ENCODE measurements at regions of chr2 and their contacts with region 1.

Region 1: DNA sequence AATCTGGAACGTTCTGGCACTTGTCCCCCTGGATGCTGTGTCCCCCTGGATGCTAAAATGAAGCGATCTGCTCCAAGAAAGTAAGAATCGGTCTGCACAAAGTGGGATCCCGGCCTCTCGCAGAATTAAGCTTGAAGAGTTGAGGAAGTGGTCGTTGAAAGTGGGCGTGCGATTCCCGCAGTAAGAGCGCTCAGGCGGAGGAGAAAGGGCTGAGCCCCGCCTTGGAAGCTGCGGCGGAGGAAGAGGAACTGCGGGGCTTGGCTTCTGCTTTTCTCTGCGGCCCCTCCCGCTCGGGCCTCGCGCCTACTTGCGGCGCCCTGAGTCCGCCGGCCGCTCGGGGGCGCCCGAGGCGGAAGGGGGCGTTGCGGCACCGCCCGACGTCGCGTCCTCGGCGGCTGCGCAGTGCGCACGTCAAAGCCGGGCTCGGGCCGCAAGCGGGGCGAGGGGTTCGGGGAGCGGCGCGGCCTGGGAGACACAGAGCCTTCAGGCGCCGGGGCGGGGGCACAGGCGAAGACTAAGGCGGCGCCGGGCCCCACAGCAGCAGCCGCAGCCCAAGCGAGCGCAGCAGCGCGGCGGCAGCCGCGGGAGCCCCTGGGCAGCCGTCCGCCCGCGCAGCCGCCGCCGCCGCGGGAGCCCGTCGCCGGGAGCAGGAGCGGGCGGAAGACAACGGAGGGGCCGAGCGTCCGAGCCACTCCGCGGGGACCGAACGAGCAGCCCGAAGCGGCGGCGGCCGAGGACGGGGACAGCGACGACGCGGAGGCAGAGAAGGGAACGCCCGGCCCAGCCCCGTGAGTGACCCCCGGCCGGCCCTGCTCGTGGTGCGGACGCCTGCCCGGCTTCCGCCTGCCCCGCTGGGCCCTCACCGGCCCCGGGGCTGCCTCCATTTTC is at the start of gene CAB39:
- DNase-seq: peak; percentile 84
- H3K4me3 ChIP-seq: peak within 1 kb of the TSS; percentile 70 to 86 (median 84)
- H3K27ac ChIP-seq: peak within 1 kb of the TSS; percentile 79
- H3K4me1 ChIP-seq: peaks cover 20% of the 10 kb centered on the region
- H3K27me3 ChIP-seq: no peaks in the 10 kb centered on the region
- CTCF ChIP-seq: peak; percentile 55
- total RNA-seq, gene CAB39: 68.3 to 115 TPM

Region 2: DNA sequence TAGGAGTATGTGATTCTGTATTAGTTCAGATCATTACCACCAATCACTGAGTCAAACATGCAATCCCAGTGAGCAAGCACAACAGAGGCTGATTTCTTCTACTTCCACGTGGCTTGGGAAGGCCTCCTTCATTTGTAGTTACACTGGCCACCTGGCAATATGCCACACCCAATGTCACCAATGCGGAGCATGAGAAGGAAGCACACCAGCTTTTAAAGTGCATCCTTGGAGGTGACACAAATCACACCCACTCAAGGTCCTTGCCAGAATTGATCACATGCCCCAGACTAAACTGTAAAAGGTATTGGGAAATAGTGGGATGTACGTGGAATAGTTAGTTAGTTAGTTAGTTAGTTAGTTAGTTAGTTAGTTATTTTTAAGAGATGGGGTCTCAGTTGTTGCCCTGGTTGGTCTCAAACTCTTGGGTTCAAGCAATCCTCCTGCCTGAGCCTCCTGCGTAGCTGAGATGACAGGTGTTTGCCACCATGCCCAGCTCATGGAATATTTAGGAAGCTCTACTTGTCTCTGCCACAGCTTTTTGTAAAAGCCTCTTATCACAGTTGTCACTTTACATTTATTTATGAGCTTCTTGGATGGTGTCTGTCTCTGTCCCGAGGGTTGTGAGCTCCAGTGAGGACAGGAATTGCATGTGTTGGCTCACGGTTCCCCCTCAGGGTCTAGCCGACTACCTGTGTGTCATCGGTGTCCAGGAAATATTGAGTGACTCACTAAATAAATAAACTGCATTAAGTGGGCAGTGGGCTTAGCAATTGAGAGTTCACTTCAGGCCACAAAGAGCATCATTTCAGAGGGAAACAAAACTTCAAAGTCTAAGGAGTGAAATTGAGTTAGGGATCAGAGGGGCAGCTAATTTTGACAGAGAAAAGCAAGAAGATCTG is 28.2 kb before region 1 on chr2:
- CTCF ChIA-PET with region 1: no interaction called
- dilution Hi-C with region 1: no loop called
- in situ Hi-C with region 1: no loop called
- intact Hi-C with region 1: loop called (anchors 1 kb)
- DNase-seq: peak; percentile 80
- H3K4me3 ChIP-seq: no peak overlapping the region
- H3K27ac ChIP-seq: peak overlapping the region; percentile 76
- H3K4me1 ChIP-seq: peaks cover 54% of the 10 kb centered on the region
- H3K27me3 ChIP-seq: no peaks in the 10 kb centered on the region
- CTCF ChIP-seq: no peak

Region 3: DNA sequence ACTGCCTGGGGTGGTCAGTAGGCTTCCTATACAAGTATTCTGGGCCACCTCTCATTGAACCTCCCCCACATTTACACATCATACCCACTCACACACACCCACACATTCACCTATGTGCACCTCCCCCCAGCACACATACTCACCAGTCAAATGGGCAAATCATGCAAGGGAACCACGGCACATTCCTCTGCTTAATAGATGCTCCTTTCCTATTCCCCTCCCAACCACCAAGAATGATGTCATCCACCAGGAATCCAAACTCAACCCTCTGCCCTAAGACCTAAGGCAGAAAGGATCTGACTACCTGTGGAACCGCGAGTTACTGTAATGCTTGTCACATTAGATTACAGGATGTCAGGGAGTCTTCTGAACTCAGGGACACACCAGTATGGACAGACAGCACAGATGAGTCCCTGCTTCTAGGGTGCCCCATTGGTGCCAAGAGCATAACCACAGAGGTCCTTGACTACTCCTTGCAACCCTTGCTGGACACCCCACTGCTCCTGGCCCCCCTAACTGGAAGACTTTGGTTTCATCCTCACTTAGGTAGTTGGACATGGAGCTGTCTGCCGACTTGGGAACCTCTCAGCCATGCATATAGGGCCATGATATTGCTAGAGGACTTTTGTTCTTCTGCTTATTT is 21.6 kb before region 1 on chr2:
- CTCF ChIA-PET with region 1: no interaction called
- dilution Hi-C with region 1: no loop called
- in situ Hi-C with region 1: no loop called
- intact Hi-C with region 1: loop called (anchors 1 kb)
- DNase-seq: peak; percentile 98
- H3K4me3 ChIP-seq: no peak overlapping the region
- H3K27ac ChIP-seq: peak overlapping the region; percentile 73
- H3K4me1 ChIP-seq: peaks cover 56% of the 10 kb centered on the region
- H3K27me3 ChIP-seq: no peaks in the 10 kb centered on the region
- CTCF ChIP-seq: no peak

Region 4: DNA sequence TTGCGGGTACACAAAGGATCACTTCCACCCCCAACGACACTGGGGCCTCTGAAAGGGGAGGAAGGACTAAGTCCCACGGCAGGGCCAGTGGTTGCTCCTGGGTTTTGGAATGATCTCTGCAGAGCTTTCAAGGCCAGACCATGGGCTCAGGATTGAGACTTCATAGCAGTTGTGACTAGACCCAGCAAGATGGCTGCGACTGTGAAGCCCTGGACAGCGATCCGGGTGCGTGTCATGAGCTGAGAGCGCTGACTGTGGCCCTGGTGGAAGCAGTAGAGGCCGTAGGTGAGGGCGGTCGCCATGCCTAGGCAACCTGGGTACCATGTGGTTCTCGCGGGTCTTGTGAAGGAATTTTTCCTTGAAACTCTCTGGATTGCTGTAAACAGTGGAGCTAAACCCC is 724.3 kb after region 1 on chr2:
- CTCF ChIA-PET with region 1: no interaction called
- dilution Hi-C with region 1: no loop called
- in situ Hi-C with region 1: no loop called
- intact Hi-C with region 1: no loop called
- DNase-seq: no peak
- H3K4me3 ChIP-seq: no peak overlapping the region
- H3K27ac ChIP-seq: no peak overlapping the region
- H3K4me1 ChIP-seq: no peaks in the 10 kb centered on the region
- H3K27me3 ChIP-seq: no peaks in the 10 kb centered on the region
- CTCF ChIP-seq: no peak